ENCODE measurements at regions of chr17 and their contacts with region 1.

Region 1: GRCh38 chr17:48593840-48594537 is 410 bp upstream of the HOXB5 start:
- DNase-seq: no peak
- H3K4me3 ChIP-seq: no peak overlapping the region
- H3K27me3 ChIP-seq: peaks cover 86% of the 10 kb centered on the region
- CTCF ChIP-seq: peak; percentile 76

Region 2: GRCh38 chr17:48335858-48336500 is 258.0 kb before region 1 on chr17:
- CTCF ChIA-PET with region 1: interaction called, 29 read pairs
- POLR2A ChIA-PET with region 1: no interaction called
- DNase-seq: peak; percentile 4
- H3K4me3 ChIP-seq: no peak overlapping the region
- H3K27me3 ChIP-seq: peaks cover 7% of the 10 kb centered on the region
- CTCF ChIP-seq: peak; percentile 62

Region 3: GRCh38 chr17:48499248-48499647 is 94.7 kb before region 1 on chr17:
- CTCF ChIA-PET with region 1: no interaction called
- POLR2A ChIA-PET with region 1: no interaction called
- DNase-seq: no peak
- H3K4me3 ChIP-seq: no peak overlapping the region
- H3K27me3 ChIP-seq: peaks cover 2% of the 10 kb centered on the region; the same call in 1 of the 2 replicates
- CTCF ChIP-seq: no peak

Region 4: GRCh38 chr17:48544349-48545021 is 49.5 kb before region 1 on chr17:
- CTCF ChIA-PET with region 1: no interaction called
- POLR2A ChIA-PET with region 1: no interaction called
- DNase-seq: no peak
- H3K4me3 ChIP-seq: peak overlapping the region; percentile 50
- H3K27me3 ChIP-seq: peaks cover 16% of the 10 kb centered on the region
- CTCF ChIP-seq: no peak